ENCODE measurements at regions of chr12 and their contacts with region 1.

Region 1: GRCh38 chr12:91061091-91061490 is 3.3 kb upstream of the KERA start:
- DNase-seq: no peak

Region 2: DNA sequence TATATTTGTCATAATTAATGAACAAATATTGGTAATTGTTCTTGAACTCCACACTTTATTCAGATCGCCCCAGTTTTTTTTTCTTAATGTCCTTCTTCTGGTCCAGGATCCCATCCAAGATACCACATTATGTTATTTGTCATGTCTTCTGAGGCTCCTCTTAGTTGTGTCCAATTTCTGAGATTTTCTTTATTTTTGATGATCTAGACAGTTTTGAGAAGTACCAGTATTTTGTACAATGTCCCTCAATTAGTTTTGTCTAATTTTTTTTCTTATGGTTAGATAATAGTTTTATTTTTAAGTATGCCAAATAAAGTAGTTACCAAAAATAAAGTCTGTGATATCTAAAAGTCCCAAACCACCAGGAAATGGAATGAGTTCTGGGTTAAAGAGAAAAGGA is 911.6 kb before region 1 on chr12:
- intact Hi-C with region 1: loop called in 1 of 2 experiments (anchors 5 kb)
- DNase-seq: no peak

Measured in posterior vena cava (tissue), 2 donors.